Activated CD4-positive, alpha-beta memory T cell treated with anti-CD3 and anti-CD28 coated beads for 36 hours (primary cell): ENCODE measurements at regions of chr9 and their contacts with region 1.

Region 1: DNA sequence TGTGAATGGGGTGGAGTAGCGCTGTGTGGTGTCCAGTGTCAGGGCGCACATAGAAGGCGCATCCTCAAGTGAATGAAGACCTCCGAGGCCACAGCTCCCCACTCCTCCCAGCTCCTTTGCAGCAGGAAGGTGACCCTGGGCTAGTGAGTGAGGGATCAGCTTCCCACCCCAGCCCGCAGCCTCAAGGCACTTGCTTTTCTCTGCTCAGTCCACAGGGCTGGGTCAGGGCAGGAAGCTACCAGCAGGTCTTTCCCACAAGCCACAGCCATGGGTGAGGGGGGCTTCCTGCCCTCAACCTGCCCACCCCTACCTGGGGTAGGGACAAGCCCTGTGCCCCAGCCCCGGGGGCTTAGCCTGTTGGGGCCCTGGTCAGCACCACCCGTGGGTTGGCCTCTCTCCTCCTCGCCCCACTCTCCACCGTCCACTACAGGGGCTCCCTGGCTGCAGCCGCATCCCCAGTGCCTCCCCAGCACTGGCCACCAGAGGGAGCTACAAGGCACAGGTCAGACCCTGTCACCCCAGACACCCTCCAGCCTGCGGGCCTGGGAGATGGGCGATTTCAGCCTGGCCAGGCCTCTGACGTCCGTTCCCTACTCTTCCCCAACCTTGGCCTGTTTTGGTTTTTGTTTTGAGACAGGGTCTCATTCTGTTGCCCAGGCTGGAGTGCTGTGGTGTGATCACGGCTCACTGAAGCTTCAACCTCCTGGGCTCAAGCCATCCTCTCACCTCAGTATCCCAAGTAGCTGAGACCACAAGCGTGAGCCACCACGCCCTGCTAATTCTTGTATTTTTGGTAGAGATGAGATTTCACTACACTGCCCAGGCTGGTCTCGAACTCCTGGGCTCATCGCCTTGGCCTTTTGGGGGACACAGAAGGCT is 1.3 kb upstream of the ABCA2 start:
- DNase-seq: peak; percentile 84
- H3K4me3 Mint-ChIP-seq: peak overlapping the region; percentile 55
- H3K27ac Mint-ChIP-seq: peak overlapping the region; percentile 1
- H3K4me1 Mint-ChIP-seq: peaks cover 46% of the 10 kb centered on the region
- H3K27me3 Mint-ChIP-seq: no peaks in the 10 kb centered on the region

Region 2: GRCh38 chr9:136790927-136791641 is 238.2 kb before region 1 on chr9 and contains the start of gene TMEM141:
- CTCF ChIA-PET with region 1: interaction called, 20 read pairs
- POLR2A ChIA-PET with region 1: interaction called, 5 read pairs
- intact Hi-C with region 1: no loop called
- DNase-seq: peak; percentile 100
- H3K4me3 Mint-ChIP-seq: peak within 1 kb of the TSS; percentile 81
- H3K27ac Mint-ChIP-seq: peak within 1 kb of the TSS; percentile 79
- H3K4me1 Mint-ChIP-seq: peaks cover 21% of the 10 kb centered on the region
- H3K27me3 Mint-ChIP-seq: peaks cover 1% of the 10 kb centered on the region
- total RNA-seq, gene TMEM141: 42.3 to 45.2 TPM

Region 3: GRCh38 chr9:136949817-136950655 is 79.3 kb before region 1 on chr9:
- CTCF ChIA-PET with region 1: interaction called, 49 read pairs
- POLR2A ChIA-PET with region 1: no interaction called
- intact Hi-C with region 1: loop called (anchors 10 kb)
- DNase-seq: peak; percentile 98
- H3K4me3 Mint-ChIP-seq: peak overlapping the region; percentile 78
- H3K27ac Mint-ChIP-seq: peak overlapping the region; percentile 76
- H3K4me1 Mint-ChIP-seq: peaks cover under 1% of the 10 kb centered on the region
- H3K27me3 Mint-ChIP-seq: no peaks in the 10 kb centered on the region

Region 4: GRCh38 chr9:137000177-137000883 is 29.0 kb before region 1 on chr9:
- CTCF ChIA-PET with region 1: interaction called, 29 read pairs
- POLR2A ChIA-PET with region 1: interaction called, 4 read pairs
- intact Hi-C with region 1: loop called (anchors 5 kb)
- DNase-seq: peak; percentile 69
- H3K4me3 Mint-ChIP-seq: no peak overlapping the region
- H3K27ac Mint-ChIP-seq: peak overlapping the region; percentile 54
- H3K4me1 Mint-ChIP-seq: peaks cover 30% of the 10 kb centered on the region
- H3K27me3 Mint-ChIP-seq: peaks cover 7% of the 10 kb centered on the region

Region 5: GRCh38 chr9:137070201-137070905 is 41.1 kb after region 1 on chr9 and contains the start of gene SAPCD2:
- CTCF ChIA-PET with region 1: interaction called, 73 read pairs
- POLR2A ChIA-PET with region 1: interaction called, 3 read pairs
- intact Hi-C with region 1: loop called (anchors 5 kb)
- DNase-seq: peak; percentile 90
- H3K4me3 Mint-ChIP-seq: peak within 1 kb of the TSS; percentile 61
- H3K27ac Mint-ChIP-seq: no peak within 1 kb of the TSS
- H3K4me1 Mint-ChIP-seq: peaks cover 8% of the 10 kb centered on the region
- H3K27me3 Mint-ChIP-seq: no peaks in the 10 kb centered on the region
- total RNA-seq, gene SAPCD2: 6.4 to 6.6 TPM

Region 6: GRCh38 chr9:137129456-137130175 is 100.3 kb after region 1 on chr9:
- CTCF ChIA-PET with region 1: interaction called, 13 read pairs
- POLR2A ChIA-PET with region 1: no interaction called
- intact Hi-C with region 1: no loop called
- DNase-seq: peak; percentile 94
- H3K4me3 Mint-ChIP-seq: peak overlapping the region; percentile 84
- H3K27ac Mint-ChIP-seq: peak overlapping the region; percentile 70
- H3K4me1 Mint-ChIP-seq: peaks cover 20% of the 10 kb centered on the region
- H3K27me3 Mint-ChIP-seq: peaks cover 2% of the 10 kb centered on the region